Gastrocnemius medialis (tissue), 4 donors: ENCODE measurements at regions of chr3 and their contacts with region 1.

Region 1: GRCh38 chr3:13282986-13283876 is 136.9 kb downstream of the NUP210 start:
- DNase-seq: no peak
- ATAC-seq: peak; percentile 18 to 37
- H3K4me3 ChIP-seq: peak overlapping the region; percentile 26 to 55 (median 45)
- H3K27ac ChIP-seq: no peak overlapping the region
- H3K4me1 ChIP-seq: peaks cover 0 to 8% of the 10 kb centered on the region in 2 donors
- H3K27me3 ChIP-seq: peaks cover 30 to 40% (median 37%) of the 10 kb centered on the region in 3 donors
- CTCF ChIP-seq: peak; percentile 14 to 51 (median 35)
- POLR2A ChIP-seq: no peak

Region 2: GRCh38 chr3:13215940-13216546 is 67.2 kb before region 1 on chr3:
- in situ Hi-C with region 1: no loop called
- intact Hi-C with region 1: loop called (anchors 5 kb)
- DNase-seq: no peak
- ATAC-seq: no peak
- H3K4me3 ChIP-seq: no peak overlapping the region
- H3K27ac ChIP-seq: no peak overlapping the region
- H3K4me1 ChIP-seq: peaks cover 0 to 4% of the 10 kb centered on the region in 2 donors
- H3K27me3 ChIP-seq: no peaks in the 10 kb centered on the region
- CTCF ChIP-seq: no peak
- POLR2A ChIP-seq: no peak

Region 3: DNA sequence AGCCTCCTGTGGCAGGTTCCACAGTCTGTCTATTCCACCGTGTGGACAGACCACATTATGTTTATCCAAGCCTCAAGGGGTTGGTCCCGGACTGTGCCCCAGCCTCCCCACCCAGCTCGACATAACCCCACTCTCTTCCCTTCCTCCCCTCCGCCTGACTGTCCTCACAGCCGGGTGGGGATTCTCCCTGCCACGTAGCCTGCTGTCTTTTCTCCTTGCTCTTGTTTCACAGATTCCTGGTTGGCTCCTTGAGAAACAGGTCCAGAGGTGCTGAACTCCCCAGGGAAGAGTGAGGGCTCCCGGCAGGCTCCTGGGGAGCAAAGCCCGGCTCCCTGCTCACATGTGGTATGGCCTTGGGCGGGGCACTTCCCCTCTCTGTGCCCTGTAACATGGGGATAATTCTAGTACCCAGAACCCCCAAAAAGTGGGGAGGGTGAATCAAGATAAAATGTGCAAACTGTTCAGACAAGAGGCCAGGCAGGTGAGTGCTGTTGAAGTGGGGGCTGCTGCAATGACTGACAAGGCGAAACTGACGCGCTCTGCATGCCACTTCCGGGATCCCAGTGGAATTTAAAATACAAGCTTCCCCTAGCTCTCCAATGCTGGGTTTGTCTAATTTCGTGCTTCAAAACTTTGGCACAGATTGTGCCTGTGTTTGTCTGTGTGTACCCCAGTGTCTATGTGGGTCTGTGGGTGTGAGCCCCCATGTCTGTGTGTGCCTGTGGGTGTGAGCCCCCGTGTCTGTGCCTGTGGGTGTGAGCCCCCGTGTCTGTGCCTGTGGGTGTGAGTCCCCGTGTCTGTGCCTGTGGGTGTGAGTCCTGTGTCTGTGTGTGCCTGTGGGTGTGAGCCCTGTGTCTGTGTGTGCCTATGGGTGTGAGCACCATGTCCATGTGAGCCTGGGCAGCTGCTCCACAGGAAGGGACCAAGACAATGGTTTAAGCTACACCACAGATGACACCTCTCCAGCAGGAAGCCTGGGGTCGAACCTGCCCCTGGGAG is 49.4 kb before region 1 on chr3:
- in situ Hi-C with region 1: no loop called
- intact Hi-C with region 1: loop called (anchors 5 kb)
- DNase-seq: no peak
- ATAC-seq: no peak
- H3K4me3 ChIP-seq: no peak overlapping the region
- H3K27ac ChIP-seq: no peak overlapping the region
- H3K4me1 ChIP-seq: no peaks in the 10 kb centered on the region
- H3K27me3 ChIP-seq: no peaks in the 10 kb centered on the region
- CTCF ChIP-seq: no peak
- POLR2A ChIP-seq: no peak